ENCODE measurements at regions of chr2 and their contacts with region 1.

Region 1: DNA sequence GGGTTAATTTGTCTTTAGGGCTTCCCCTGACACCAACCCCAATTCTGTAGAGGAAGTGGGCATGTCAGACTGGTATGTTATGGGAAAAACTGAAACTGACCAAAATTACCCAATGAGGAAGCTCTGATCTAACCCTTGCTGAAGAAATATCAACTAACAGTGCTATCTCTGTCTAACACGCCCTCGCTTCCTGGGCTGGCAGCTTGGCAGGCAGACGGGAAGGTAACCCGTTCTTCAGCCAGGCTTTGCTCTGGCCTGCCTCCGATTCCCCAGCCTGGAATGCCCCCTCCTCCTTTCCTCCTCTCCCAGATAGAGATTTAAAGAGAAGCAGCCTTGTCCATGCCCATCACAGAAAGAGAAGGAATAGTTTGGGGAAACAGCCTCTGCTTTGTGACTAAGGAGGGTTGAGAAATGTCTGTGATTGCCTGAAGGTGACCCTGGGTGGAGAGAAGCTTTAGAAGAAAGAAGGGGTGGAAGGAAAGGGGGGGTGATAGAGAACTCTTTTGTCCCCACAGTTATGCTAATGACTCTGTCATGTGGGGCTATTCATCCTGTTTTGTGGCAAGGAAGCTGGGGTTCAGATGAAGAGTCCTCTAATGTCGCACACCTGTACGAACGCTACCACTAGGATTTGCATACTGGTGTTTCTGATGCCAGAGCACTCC is 15.4 kb downstream of the HK2 start:
- DNase-seq: peak; percentile 36 to 82 (median 56)
- H3K4me3 ChIP-seq: peak overlapping the region; percentile 34
- H3K4me3 Mint-ChIP-seq: peak overlapping the region; percentile 54 to 88 (median 76)
- H3K27ac ChIP-seq: peak overlapping the region; percentile 49
- H3K27ac Mint-ChIP-seq: peak overlapping the region; percentile 93 to 100 (median 96)
- H3K4me1 ChIP-seq: peaks cover 70% of the 10 kb centered on the region
- H3K4me1 Mint-ChIP-seq: peaks cover 39 to 58% (median 52%) of the 10 kb centered on the region in 3 donors
- H3K27me3 ChIP-seq: no peaks in the 10 kb centered on the region
- H3K27me3 Mint-ChIP-seq: no peaks in the 10 kb centered on the region

Region 2: DNA sequence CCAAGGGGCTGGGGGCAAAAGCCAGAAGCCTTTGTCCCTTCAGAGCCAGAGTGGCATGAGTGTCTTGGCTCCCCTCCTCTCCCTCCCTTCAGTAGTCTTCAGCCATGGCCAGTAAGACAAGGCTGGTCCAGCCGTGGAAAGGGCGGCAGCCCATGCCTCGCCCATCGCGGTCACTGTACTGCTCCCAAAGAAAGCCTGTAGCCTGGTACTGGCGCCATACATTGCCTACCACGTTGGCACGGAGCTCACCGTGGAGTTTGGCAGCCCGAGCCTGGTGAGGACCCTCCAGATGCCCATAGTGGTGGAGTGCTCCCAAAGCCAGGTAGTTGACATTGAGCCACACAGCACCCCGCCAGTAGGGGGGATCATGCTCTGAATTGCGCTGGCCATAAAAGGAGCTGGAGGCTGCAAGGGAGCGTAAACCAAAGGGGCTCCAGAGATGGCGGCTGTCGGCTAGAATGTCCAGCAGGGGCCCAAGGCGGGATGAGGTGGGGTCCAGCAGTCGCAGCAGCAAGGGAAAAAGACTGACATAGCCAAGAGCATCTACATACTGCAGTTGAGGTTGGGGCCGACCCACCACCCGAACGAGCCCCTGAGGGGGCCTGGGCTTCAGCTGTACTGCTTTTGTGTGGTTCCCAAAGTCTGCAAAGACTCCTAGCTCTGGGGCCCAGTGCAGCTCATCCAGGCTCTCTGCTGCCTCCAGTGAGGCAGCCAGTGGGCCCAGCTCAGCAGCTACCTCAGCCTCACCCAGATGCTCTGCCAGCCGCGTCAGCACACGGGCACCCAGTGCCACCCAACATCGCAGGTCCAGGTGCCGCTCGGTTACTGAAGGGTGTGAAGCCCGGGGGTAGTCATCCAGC is 387.9 kb before region 1 on chr2:
- CTCF ChIA-PET with region 1: no interaction called
- POLR2A ChIA-PET with region 1: no interaction called
- DNase-seq: no peak
- H3K4me3 ChIP-seq: no peak overlapping the region
- H3K4me3 Mint-ChIP-seq: peak overlapping the region in 4 of 7 donors; percentile 8 to 73 (median 36)
- H3K27ac ChIP-seq: no peak overlapping the region
- H3K27ac Mint-ChIP-seq: peak overlapping the region in 3 of 8 donors; percentile 15 to 40 (median 24)
- H3K4me1 ChIP-seq: peaks cover 25% of the 10 kb centered on the region
- H3K4me1 Mint-ChIP-seq: peaks cover 41 to 62% (median 54%) of the 10 kb centered on the region in 3 donors
- H3K27me3 ChIP-seq: no peaks in the 10 kb centered on the region
- H3K27me3 Mint-ChIP-seq: peaks cover 0 to 2% of the 10 kb centered on the region in 2 donors

Region 3: DNA sequence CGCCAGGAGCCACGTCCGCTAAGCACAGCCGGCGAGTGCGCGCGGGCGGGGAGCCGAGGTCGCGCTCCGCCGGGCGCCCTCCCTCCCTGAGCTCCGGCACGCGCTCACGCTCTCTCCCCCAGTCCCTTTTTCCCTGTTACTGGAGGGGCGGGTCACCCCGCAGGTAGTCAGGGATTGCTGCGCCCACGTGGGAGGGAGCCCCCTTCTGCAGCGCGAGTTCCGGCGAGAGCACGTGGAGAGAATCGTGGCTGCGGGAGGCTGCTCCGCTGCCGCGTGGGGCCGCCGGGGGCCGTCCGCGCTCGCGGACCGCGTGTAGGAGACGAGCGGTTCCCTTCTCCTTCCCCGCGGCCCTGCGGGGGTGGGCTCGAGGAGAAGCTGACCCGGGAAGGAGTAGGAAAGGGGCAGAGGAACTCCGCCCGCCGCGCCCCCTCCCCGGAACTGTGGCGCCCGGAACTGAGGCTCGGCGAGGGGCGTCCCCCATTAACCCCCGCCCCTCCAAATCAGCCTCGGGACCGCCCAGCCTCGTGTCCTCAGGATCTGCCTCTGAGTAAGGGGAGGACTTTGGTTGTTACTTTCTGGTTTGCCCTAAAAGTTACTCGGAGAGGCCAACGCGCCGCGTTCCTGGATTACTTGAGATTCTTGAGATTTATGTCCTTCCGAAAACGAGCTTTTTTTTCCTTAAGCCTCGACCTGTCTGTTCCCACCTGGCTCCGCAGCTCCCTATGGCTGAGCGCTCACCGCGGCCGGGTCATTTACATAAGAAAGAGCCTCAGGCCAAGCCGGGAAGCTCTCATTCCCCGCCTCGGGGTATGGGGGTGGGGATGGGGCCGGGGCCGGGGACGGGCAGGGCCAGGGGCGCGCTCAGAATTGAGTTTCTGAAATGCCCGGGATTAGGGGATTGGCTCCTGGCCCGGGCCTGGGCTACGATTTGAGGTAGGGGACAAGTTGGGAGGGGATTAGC is 14.3 kb before region 1 on chr2:
- CTCF ChIA-PET with region 1: interaction called, 30 read pairs
- POLR2A ChIA-PET with region 1: interaction called, 11 read pairs
- DNase-seq: peak; percentile 18 to 63 (median 40)
- H3K4me3 ChIP-seq: peak overlapping the region; percentile 61
- H3K4me3 Mint-ChIP-seq: peak overlapping the region; percentile 85 to 93 (median 88)
- H3K27ac ChIP-seq: peak overlapping the region; percentile 26
- H3K27ac Mint-ChIP-seq: peak overlapping the region in 4 of 8 donors; percentile 32 to 84 (median 72)
- H3K4me1 ChIP-seq: peaks cover 17% of the 10 kb centered on the region
- H3K4me1 Mint-ChIP-seq: peaks cover 27 to 42% (median 35%) of the 10 kb centered on the region in 3 donors
- H3K27me3 ChIP-seq: no peaks in the 10 kb centered on the region
- H3K27me3 Mint-ChIP-seq: peaks cover 11 to 35% of the 10 kb centered on the region in 2 donors

Measured in CD8-positive, alpha-beta memory T cell (primary cell).